Activated naive CD4-positive, alpha-beta T cell treated with anti-CD3 and anti-CD28 coated beads for 36 hours (primary cell): ENCODE measurements at regions of chr17 and their contacts with region 1.

Region 1: DNA sequence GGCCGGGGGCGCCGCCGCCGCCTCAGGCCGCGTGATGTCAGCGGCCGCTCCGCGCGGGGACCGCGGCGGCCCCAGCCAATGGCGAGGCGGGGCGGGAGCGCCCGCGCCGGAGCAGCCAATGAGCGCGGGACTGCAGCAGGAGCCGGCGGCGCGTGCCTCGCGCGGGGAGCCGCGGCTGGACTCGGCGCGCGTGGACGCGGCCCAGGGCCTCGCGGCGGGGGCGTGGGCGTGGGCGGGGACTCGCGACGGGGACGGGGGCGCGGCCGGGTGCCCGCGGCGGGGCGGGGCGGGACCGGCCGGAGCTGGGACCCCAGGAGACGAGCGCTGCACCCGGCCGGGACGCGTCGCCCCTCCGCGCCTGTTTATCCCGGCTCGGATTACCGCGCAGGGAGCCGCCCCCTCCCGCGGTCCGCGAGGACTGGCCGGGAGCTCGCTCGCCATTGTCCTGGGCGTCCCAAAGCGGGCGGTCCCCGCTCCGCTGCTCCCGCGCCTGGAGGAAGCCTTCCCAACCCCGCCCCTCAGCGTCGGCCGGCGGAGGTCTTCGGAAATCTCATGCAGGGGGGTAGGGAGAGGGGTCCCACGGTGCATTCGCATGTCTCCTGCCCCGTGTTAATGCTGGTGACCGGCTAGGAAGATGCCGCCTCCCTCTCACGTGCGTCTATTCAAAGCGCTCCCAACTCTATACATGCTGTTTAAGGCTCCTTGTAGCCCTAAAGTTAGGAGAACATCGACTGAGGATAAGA is at the start of gene RNF157:
- DNase-seq: peak; percentile 53
- H3K4me3 Mint-ChIP-seq: peak within 1 kb of the TSS; percentile 78
- H3K27ac Mint-ChIP-seq: peak within 1 kb of the TSS; percentile 75
- H3K4me1 Mint-ChIP-seq: peaks cover 75% of the 10 kb centered on the region
- H3K27me3 Mint-ChIP-seq: no peaks in the 10 kb centered on the region
- total RNA-seq, gene RNF157: 38.1 to 45.3 TPM

Region 2: GRCh38 chr17:76199469-76199868 is 41.2 kb before region 1 on chr17:
- CTCF ChIA-PET with region 1: no interaction called
- intact Hi-C with region 1: loop called (anchors 1 kb)
- DNase-seq: peak; percentile 87
- H3K4me3 Mint-ChIP-seq: no peak overlapping the region
- H3K27ac Mint-ChIP-seq: peak overlapping the region; percentile 91
- H3K4me1 Mint-ChIP-seq: peaks cover 74% of the 10 kb centered on the region
- H3K27me3 Mint-ChIP-seq: no peaks in the 10 kb centered on the region